AG04450 (cell line): ENCODE measurements at regions of chrX and their contacts with region 1.

Region 1: GRCh38 chrX:24259544-24260240 is 54.2 kb downstream of the SUPT20HL2 start:
- DNase-seq: peak; percentile 34
- H3K4me3 ChIP-seq: no peak overlapping the region
- H3K27ac ChIP-seq: no peak overlapping the region
- H3K27me3 ChIP-seq: no peaks in the 10 kb centered on the region
- CTCF ChIP-seq: peak; percentile 64

Region 2: GRCh38 chrX:24190500-24191156 is 69.1 kb before region 1 on chrX:
- CTCF ChIA-PET with region 1: no interaction called
- POLR2A ChIA-PET with region 1: no interaction called
- DNase-seq: peak; percentile 24
- H3K4me3 ChIP-seq: no peak overlapping the region
- H3K27ac ChIP-seq: peak overlapping the region; percentile 39
- H3K27me3 ChIP-seq: no peaks in the 10 kb centered on the region
- CTCF ChIP-seq: no peak

Region 3: DNA sequence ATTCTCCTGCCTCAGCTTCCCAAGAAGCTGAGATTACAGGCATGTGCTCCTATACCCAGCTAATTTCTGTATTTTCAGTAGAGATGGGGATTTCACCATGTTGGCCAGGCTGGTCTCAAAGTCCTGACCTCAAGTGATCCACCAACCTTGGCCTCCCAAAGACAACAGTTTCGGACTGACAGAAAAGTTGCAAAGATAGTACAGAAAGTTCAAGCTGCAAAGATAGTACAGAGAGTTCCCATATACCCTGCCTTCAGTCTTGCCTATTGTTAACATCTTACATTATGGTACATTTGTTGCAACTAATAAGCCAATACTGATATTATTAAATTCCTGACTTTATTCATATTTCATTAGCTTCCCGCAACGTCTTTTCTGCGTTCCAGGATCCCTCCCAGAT is 11.7 kb before region 1 on chrX:
- CTCF ChIA-PET with region 1: interaction called, 12 read pairs
- POLR2A ChIA-PET with region 1: no interaction called
- DNase-seq: no peak
- H3K4me3 ChIP-seq: no peak overlapping the region
- H3K27ac ChIP-seq: no peak overlapping the region
- H3K27me3 ChIP-seq: no peaks in the 10 kb centered on the region
- CTCF ChIP-seq: no peak

Region 4: DNA sequence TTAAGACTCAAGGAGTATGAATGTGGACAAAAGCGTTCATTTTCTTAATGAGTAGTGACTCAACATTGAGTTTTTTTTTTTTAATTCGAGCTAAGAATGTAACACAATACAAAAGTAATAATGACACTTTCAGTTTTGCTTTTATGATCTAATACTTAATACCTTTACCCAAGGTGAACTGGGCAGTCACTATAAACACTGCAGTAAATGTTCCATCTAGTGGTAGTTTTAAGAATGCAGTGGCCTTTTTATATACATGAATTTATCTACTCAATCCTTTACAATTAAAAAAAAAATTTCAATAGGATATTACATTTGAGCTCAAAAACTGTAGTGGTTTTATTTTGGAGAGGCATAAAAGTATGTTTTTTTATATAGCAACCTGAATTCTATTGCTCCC is 239.3 kb after region 1 on chrX:
- CTCF ChIA-PET with region 1: interaction called, 40 read pairs
- POLR2A ChIA-PET with region 1: no interaction called
- DNase-seq: no peak
- H3K4me3 ChIP-seq: no peak overlapping the region
- H3K27ac ChIP-seq: no peak overlapping the region
- H3K27me3 ChIP-seq: no peaks in the 10 kb centered on the region
- CTCF ChIP-seq: peak; percentile 57